ENCODE measurements at regions of chr3 and their contacts with region 1.

Region 1: GRCh38 chr3:71226565-71227269 is 356.8 kb downstream of the FOXP1 start:
- DNase-seq: peak; percentile 81
- H3K4me3 Mint-ChIP-seq: peak overlapping the region; percentile 79
- H3K27ac Mint-ChIP-seq: peak overlapping the region; percentile 91
- H3K4me1 Mint-ChIP-seq: peaks cover 29% of the 10 kb centered on the region
- H3K27me3 Mint-ChIP-seq: peaks cover 48% of the 10 kb centered on the region

Region 2: DNA sequence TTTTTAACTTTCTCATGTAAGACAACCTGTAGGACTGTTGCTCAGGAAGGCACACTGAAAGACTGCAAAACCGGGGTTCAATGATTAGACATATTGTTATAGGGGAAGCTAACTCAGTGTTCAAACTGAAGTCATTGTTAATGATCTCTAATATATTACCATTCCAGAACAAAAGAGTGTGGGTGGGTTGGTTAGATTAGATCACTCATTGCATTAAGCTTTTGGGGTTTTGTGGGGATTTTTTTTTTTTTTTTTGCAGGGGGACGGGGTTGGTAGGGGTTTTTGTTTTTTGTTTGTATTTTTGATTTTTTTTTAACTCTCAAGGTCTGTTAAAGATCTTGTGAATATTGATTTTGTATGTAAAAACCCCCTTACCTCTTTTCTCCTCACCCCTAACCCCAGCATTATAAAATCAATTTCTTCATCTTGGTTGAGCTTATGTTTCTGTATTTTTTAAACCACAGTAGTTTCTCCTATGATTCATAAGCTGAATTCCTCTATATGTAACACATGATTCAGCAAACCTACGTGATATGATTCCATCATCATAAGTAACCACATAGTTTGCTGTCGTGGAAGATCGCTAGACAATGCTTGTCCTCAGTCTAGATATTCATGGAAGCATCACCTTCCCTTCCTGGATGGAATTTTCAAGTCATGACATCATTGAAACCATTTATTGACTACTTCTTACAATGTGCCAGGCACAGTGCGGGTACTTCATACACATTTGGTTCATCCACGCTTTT is 370.1 kb before region 1 on chr3:
- intact Hi-C with region 1: loop called (anchors 1 kb)
- DNase-seq: no peak
- H3K4me3 Mint-ChIP-seq: no peak overlapping the region
- H3K27ac Mint-ChIP-seq: peak overlapping the region; percentile 49
- H3K4me1 Mint-ChIP-seq: peaks cover 22% of the 10 kb centered on the region
- H3K27me3 Mint-ChIP-seq: peaks cover 6% of the 10 kb centered on the region

Region 3: DNA sequence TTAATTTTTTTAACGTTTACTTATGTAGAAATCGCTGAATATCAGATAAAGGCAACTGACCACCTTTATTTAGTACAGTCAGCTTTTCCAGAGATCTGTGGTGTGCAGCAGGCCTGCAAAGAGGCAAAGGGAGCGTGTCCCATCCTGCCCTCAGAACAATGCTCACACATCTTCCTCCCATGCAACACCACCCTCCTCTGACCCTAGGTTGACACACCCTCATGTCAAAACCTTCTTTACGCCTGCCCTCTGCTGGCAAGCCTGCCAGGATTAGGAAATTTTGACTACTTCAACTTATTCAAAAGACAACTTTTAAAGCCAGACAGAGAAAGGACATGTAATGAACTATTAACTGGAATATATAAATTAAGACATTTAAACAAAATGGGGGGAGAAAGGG is 156.9 kb before region 1 on chr3:
- intact Hi-C with region 1: loop called (anchors 1 kb)
- DNase-seq: peak; percentile 33
- H3K4me3 Mint-ChIP-seq: no peak overlapping the region
- H3K27ac Mint-ChIP-seq: peak overlapping the region; percentile 6
- H3K4me1 Mint-ChIP-seq: peaks cover 72% of the 10 kb centered on the region
- H3K27me3 Mint-ChIP-seq: no peaks in the 10 kb centered on the region

Region 4: GRCh38 chr3:71185733-71186455 is 40.8 kb before region 1 on chr3:
- intact Hi-C with region 1: loop called (anchors 1 kb)
- DNase-seq: no peak
- H3K4me3 Mint-ChIP-seq: no peak overlapping the region
- H3K27ac Mint-ChIP-seq: no peak overlapping the region
- H3K4me1 Mint-ChIP-seq: peaks cover 15% of the 10 kb centered on the region
- H3K27me3 Mint-ChIP-seq: peaks cover 2% of the 10 kb centered on the region

Region 5: DNA sequence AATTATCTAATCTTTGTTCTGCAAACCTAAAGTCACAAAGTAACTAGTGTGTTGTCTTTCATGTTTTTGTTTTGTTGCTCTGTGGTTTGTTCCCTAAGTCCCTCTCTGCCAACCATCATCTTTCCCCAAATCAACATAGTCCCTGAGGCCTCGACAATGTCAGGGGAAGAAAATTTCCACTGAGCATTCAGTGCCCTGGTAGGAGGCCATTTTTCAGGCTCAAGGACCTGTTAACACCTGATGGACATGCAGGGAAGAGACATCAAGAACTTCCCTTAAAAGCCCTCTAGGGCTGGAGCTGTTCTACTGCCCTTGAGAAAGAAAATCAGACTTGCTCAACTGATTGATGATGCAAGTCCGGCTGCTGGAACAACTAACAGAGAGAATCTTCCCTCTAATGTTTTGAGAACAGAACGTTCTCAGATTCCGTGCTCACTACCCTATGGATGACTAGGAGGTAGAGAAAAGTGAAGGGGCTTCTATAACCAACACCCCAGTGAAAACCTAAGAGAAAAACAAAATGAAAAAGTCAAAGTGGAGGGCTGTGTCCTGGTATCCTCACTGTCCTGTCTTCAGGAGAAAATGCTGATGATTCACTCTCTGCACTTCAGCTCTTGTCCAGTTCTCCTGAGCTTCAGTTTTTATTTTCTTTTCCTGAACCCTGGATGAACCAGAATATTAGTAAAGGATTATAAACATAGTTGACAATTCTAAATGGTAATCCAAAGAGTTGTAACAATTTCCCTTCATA is 16.3 kb before region 1 on chr3:
- intact Hi-C with region 1: no loop called
- DNase-seq: no peak
- H3K4me3 Mint-ChIP-seq: no peak overlapping the region
- H3K27ac Mint-ChIP-seq: no peak overlapping the region
- H3K4me1 Mint-ChIP-seq: peaks cover 5% of the 10 kb centered on the region
- H3K27me3 Mint-ChIP-seq: peaks cover 13% of the 10 kb centered on the region

Region 6: GRCh38 chr3:71389911-71390573 is 163.3 kb after region 1 on chr3:
- intact Hi-C with region 1: loop called (anchors 1 kb)
- DNase-seq: no peak
- H3K4me3 Mint-ChIP-seq: peak overlapping the region; percentile 10
- H3K27ac Mint-ChIP-seq: peak overlapping the region; percentile 27
- H3K4me1 Mint-ChIP-seq: peaks cover 33% of the 10 kb centered on the region
- H3K27me3 Mint-ChIP-seq: peaks cover 18% of the 10 kb centered on the region

Region 7: DNA sequence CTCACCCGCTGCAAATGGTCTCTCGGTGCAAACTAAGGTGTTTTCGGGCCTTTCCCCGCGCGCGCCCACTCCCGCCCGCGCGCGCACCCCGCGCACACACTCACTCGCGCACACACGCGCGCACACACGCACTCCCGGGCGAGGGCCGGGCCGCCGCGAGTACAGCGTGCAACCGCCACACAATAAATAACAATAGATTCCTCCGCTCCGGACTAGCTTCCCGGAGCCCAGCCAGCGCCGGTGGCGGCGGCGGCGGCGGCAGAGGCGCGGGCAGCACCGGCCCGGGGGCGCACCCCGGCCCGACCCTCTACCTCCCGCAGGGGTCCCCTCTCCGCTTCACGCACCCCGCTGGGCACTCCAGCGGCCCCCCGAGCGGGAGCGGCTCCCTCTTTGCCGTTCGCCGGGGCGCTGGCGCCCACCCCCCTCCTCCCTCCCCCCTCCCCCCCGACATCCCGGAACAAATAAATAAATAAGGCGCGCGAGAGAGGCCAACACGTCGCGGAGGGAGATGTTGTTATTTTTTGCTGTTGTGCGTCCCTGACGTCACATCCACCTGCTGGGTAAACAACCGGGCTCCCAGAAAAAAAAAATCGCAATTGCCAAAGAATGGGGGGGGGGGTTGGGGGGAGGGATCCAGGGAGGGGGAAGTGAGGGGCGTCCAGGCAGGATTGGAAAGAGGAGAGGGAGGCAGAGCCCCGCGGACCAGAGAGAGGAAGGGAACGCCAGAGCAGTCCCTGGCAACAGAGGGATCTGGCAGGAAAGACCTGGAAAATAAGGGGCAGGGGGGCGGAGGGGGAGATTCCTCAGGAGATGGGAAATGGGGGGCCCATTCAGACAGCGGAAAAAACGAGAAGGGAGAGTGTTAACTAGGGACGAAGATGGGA is 357.1 kb after region 1 on chr3 and contains the start of gene FOXP1:
- intact Hi-C with region 1: loop called (anchors 1 kb)
- DNase-seq: peak; percentile 37
- H3K4me3 Mint-ChIP-seq: peak within 1 kb of the TSS; percentile 90
- H3K27ac Mint-ChIP-seq: peak within 1 kb of the TSS; percentile 93
- H3K4me1 Mint-ChIP-seq: peaks cover 47% of the 10 kb centered on the region
- H3K27me3 Mint-ChIP-seq: peaks cover 31% of the 10 kb centered on the region
- total RNA-seq, gene FOXP1: 94.8 and 97.6 TPM in 2 replicates